Sciatic nerve (tissue), 2 donors: ENCODE measurements at regions of chr2 and their contacts with region 1.

Region 1: DNA sequence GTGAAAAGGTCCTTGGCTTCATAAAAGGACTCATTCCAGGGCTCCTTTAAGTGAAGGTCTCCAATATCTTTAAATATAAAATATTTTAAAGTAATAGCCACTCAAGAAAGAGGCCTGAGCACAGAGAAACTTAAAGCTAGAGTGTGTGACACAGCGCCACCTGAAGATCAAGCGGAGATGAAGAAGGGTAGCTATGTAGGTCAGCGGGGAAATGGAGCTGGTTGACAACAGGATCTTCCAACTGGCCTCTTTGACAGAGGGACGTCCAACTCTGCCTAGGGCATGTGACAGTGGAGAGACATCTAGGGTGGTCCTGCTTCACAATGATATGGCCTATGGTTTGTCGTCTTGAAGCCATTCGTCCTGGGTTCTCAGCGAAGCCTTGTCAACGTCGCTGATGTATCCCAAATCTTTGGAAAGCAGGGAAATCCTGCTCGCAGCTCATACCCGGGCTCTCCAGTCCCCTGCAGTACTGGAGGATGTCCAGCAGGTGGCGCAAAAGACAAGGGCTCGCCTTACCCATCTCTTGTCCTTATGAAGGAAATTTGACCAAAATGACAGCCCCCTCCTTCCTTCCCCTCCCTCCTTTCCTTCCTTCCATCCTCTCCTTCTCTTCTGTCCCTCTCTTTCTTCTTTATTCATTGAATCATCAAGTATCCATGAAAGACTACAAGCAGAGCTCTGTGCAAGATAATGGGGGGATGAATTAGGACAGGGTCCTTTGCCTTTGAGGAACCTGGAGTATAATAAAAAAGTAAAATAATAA is 59.6 kb downstream of the LONRF2 start:
- DNase-seq: peak; percentile 84
- ATAC-seq: peak; percentile 71

Region 2: GRCh38 chr2:99559075-99559662 is 703.6 kb before region 1 on chr2:
- intact Hi-C with region 1: loop called (anchors 10 kb)
- DNase-seq: peak; percentile 96
- ATAC-seq: peak; percentile 94

Region 3: GRCh38 chr2:100381240-100381639 is 118.5 kb after region 1 on chr2:
- intact Hi-C with region 1: loop called (anchors 10 kb)
- DNase-seq: peak; percentile 90
- ATAC-seq: peak; percentile 62